ENCODE measurements at regions of chr15 and their contacts with region 1.

Region 1: DNA sequence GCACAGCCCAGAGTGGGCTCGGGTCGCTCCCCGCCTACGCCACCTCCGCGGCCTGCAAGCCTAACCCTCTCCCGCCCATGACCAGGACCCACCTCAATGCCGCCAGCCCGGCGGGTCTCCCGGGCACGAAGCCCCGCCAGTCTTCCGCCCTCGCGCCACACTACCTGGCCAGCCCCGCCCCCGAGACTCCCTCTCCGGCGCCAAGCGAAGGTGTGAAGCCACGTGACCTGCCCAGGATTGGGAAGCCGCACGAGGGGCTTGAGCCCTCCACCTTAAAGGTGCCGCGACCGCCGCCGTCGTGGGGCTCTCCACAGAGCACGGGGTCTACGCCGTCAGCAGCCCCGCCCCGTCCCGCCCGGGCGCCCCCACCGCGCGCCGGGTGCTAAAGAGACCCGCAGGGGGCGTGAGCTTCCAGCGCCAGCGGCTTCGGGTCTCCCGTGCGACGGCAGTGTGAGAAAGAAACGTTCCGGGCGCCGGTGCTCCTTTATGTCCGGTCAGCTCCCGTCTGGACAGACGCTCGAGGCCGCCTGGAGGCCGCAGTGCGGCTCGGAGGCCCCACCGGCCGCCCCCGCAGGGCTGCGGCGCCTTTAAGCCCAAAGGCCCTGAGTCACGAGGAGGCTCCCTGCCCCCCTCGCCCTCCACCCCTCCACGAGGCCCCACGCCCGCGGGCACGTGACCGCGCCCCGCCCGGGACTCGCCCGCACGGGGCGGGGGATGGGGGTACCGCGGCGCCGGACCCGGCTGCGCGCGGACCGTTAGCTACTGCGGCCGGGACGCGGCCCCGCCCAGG is at the start of gene CPEB1:
- DNase-seq: peak; percentile 88
- H3K4me3 ChIP-seq: peak within 1 kb of the TSS; percentile 30 to 62 (median 58)
- H3K27ac ChIP-seq: peak within 1 kb of the TSS; percentile 51 to 63 (median 54)
- H3K4me1 ChIP-seq: peaks cover 0 to 28% (median 27%) of the 10 kb centered on the region in 4 donors
- H3K27me3 ChIP-seq: peaks cover 0 to 27% (median 0%) of the 10 kb centered on the region in 3 donors
- CTCF ChIP-seq: no peak
- EP300 ChIP-seq: no peak
- POLR2A ChIP-seq: no peak
- total RNA-seq, gene CPEB1: 8.3 to 13.2 (median 12.1) TPM

Region 2: DNA sequence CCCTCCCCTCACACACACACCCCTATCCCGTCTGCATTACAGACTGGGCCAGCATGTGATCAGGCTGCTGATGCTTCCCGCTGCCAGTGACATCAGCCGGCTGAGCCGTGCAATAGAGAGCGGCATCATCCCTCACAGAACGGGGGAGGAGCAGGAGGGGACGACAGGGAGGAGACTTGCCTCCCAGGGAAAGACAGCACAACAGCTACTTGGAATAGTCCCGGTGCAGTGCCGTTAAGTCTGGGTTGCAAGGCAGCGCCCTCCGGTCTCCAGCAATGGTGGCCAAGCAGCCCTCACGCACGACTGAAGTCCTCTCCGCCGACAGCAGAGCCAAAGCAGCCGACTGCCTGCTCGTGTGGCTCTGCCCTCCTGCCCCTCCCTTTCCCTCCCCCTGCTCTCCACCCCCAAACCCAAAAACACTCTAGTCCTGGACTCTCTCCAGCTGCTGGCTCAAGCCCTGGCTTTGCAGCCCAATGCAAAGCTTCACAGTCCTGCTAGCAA is 75.5 kb before region 1 on chr15:
- intact Hi-C with region 1: loop called (anchors 2 kb)
- DNase-seq: peak; percentile 92
- H3K4me3 ChIP-seq: peak overlapping the region; percentile 35 to 54 (median 48)
- H3K27ac ChIP-seq: peak overlapping the region; percentile 75 to 81 (median 77)
- H3K4me1 ChIP-seq: peaks cover 0 to 21% (median 15%) of the 10 kb centered on the region in 4 donors
- H3K27me3 ChIP-seq: no peaks in the 10 kb centered on the region
- CTCF ChIP-seq: no peak
- EP300 ChIP-seq: peak in 1 of 4 donors; percentile 41
- POLR2A ChIP-seq: peak in 1 of 2 donors; percentile 6

Region 3: DNA sequence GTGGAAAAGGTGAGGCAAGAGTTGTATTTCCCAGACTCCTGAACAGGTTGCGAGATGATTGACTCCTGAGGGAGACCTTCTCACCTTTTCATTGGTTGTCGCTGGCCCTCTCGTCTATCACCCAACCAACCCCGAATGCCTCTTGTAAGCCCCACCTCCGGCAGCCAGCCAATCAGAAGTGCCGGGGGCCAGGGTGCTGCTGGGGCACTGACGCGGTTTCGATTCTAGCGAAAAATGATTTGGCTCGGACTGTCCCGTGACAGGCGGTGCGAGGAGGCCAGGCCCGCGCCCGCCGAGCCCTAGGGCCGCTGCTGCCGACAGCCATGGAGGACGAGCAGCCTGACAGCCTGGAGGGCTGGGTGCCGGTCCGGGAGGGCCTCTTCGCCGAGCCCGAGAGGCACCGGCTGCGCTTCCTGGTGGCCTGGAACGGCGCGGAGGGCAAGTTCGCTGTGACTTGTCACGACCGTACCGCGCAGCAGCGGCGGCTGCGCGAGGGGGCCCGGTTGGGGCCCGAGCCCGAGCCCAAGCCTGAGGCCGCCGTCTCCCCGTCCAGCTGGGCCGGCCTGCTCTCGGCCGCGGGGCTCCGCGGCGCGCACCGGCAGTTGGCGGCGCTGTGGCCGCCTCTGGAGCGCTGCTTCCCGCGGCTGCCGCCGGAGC is 162.3 kb after region 1 on chr15 and contains the start of gene WHAMM:
- intact Hi-C with region 1: loop called (anchors 5 kb)
- DNase-seq: peak; percentile 100
- H3K4me3 ChIP-seq: peak within 1 kb of the TSS; percentile 71 to 96 (median 82)
- H3K27ac ChIP-seq: peak within 1 kb of the TSS; percentile 96 to 100 (median 98)
- H3K4me1 ChIP-seq: peaks cover 0 to 25% (median 19%) of the 10 kb centered on the region in 4 donors
- H3K27me3 ChIP-seq: no peaks in the 10 kb centered on the region
- CTCF ChIP-seq: no peak
- EP300 ChIP-seq: peak in 1 of 4 donors; percentile 16
- POLR2A ChIP-seq: peak; percentile 91 to 92
- total RNA-seq, gene WHAMM: 7.6 to 10.5 (median 9.0) TPM

Region 4: DNA sequence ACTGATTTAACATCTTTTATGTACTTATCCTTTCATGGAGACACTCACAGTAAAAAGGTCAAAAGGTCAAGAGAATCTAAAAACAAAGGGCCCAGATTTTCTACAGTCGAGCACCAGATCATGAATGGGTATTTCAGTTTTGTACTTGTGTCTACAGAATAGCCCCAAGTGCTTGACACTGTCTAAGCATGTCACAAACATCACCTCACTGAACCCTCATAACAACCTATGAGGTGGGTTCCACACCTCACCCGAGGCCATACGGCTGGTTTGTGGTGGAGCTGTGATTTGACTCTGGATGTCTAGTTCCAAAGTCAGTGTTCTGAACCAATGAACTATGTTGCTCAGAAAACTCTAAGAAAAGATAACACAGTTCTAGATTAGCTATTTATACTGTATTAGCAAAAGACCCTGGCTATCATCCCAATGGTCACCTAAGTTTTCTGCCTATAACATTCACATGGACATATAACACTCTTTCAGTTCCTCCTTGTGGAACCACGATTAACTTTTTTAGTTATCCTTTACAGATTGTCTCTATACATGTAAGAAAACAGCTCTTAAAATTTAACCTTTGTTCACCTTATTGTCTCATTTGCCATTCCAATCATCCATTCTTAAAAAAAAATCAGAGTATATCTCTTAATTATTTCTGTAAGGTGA is 485.8 kb after region 1 on chr15:
- intact Hi-C with region 1: no loop called
- DNase-seq: no peak
- H3K4me3 ChIP-seq: no peak overlapping the region
- H3K27ac ChIP-seq: no peak overlapping the region
- H3K4me1 ChIP-seq: no peaks in the 10 kb centered on the region
- H3K27me3 ChIP-seq: no peaks in the 10 kb centered on the region
- CTCF ChIP-seq: no peak
- EP300 ChIP-seq: no peak
- POLR2A ChIP-seq: no peak

Measured in sigmoid colon (tissue), 7 donors.